ENCODE measurements at regions of chr10 and their contacts with region 1.

Region 1: DNA sequence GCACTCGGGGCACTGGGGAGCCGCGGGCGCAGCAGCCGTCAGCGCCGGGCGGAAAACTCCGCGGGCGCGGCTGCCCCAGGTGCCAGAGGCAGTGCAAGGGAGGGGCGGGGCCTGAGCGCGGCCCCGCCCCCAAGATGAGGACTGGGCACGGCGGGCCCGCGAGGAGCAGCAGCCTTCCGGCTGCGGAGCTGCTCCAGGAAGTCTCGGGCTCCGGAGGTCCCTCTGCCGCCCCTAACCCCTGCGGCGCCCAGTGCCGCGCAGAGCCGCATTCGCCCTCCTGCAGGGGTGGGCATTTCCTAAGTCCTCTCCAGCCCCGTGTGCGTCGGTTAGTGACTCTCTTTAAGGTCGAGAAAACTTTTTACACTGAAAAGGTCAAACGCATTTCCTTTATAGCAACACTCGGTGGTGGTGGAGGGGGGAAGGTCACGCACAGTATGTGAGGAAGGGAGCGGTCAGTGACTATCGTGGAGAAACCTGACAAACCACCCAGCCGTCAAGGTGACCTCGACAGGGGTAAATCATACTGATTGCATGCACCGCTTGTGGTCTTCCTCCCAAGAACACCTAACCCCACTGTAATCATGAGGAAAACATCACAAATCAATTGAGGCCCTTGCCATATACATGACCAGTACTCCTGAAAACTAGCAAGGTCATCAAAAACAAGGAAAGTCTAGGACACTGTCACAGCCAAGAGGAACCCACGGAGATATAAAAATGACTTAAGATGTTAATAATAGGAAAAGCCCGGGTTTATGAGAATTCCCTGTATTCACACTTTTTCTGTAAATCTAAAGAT is at the start of gene ANXA11:
- DNase-seq: peak; percentile 82 to 86 (median 83)
- H3K4me3 ChIP-seq: peak within 1 kb of the TSS; percentile 63 to 96
- H3K4me3 Mint-ChIP-seq: peak within 1 kb of the TSS; percentile 88 to 99 (median 92)
- H3K27ac ChIP-seq: peak within 1 kb of the TSS; percentile 82
- H3K27ac Mint-ChIP-seq: peak within 1 kb of the TSS; percentile 93 to 97 (median 95)
- H3K4me1 ChIP-seq: peaks cover 54% of the 10 kb centered on the region
- H3K4me1 Mint-ChIP-seq: peaks cover 35 to 58% (median 49%) of the 10 kb centered on the region in 4 donors
- H3K27me3 ChIP-seq: no peaks in the 10 kb centered on the region
- H3K27me3 Mint-ChIP-seq: no peaks in the 10 kb centered on the region
- total RNA-seq, gene ANXA11: 202 to 211 TPM

Region 2: DNA sequence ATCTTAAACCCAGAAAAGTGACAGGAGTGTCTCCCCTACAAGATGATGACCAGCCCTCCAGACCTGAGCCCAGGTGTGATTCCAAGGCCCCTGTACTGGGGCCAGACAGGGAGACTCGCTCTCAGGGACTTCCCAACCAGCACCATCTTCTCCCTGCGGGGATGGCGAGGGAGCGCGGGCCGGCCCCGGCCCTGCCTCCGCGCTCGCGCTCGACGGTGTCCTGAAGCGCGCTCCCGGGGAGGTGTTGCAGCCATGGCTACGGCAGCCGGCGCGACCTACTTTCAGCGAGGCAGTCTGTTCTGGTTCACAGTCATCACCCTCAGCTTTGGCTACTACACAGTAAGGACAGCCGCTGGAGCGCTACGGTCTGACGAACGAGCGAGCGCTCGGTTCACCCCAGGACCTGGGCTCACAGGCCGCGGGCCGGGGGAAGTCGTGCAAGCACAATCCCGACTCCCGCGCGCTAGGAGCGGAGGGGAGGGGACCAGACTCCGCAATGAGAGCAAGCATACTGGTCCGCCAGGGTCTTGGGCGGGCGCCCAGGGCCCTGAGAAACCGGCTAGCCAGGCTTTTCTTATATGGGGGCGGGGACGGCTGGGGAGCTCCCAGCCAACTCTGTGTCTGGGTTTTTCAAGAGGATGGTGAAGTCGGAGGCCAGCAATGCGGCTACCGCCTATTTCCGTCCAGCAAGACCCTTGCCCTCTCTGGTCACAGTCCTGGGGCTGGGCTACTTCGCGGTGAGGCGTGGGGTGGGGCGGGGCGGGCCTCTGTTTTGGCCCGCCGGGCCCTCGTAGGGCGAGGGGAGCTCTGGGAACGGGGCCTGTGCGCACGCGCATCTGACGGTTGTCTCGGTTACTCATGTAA is 127.0 kb before region 1 on chr10 and contains the start of gene TMEM254:
- CTCF ChIA-PET with region 1: interaction called, 3 read pairs
- POLR2A ChIA-PET with region 1: interaction called, 6 read pairs
- intact Hi-C with region 1: loop called (anchors 5 kb)
- DNase-seq: peak; percentile 83 to 85 (median 85)
- H3K4me3 ChIP-seq: peak within 1 kb of the TSS; percentile 76 to 86
- H3K4me3 Mint-ChIP-seq: peak within 1 kb of the TSS; percentile 92 to 98 (median 96)
- H3K27ac ChIP-seq: peak within 1 kb of the TSS; percentile 83
- H3K27ac Mint-ChIP-seq: peak within 1 kb of the TSS; percentile 85 to 99 (median 98)
- H3K4me1 ChIP-seq: peaks cover 21% of the 10 kb centered on the region
- H3K4me1 Mint-ChIP-seq: peaks cover 13 to 30% (median 17%) of the 10 kb centered on the region in 4 donors
- H3K27me3 ChIP-seq: no peaks in the 10 kb centered on the region
- H3K27me3 Mint-ChIP-seq: no peaks in the 10 kb centered on the region
- total RNA-seq, gene TMEM254: 14.2 to 16.6 TPM

Region 3: DNA sequence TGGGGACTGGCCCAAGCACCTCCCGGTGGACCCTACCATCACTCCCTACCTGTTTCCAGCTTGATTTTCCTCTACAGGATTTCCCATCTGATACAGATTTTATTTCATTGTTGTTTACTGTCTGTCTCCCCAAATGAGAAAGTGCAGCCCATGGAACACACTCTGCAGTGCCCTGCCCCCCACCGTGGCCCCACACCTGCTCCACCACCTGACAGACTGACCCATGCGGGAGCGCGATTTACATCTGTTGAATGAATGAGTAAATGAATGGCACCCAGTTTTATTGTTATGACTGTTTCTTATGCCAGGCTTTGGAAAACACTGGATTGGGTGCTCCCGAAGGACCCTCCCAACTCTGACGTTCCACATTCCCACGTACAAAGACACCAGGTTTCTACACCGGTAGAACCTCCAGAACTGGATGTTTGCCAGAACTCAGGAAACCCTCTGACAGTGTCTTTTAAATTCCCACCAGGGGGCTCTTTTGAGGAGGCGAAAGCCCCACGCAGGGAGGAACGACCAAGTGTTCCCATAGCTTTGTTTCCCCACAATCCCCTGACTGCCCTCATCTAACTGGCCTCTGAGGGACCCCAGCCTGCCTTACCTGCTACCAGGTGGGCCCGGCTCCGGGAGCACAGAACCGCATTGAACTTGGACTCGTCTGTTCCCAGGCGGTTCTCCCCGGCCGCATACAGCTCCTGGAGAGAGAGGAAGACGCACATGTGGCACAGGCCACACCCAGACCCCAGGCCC is 44.2 kb before region 1 on chr10:
- CTCF ChIA-PET with region 1: interaction called, 5 read pairs
- POLR2A ChIA-PET with region 1: interaction called, 15 read pairs
- intact Hi-C with region 1: loop called (anchors 5 kb)
- DNase-seq: no peak
- H3K4me3 ChIP-seq: no peak overlapping the region
- H3K4me3 Mint-ChIP-seq: no peak overlapping the region
- H3K27ac ChIP-seq: no peak overlapping the region
- H3K27ac Mint-ChIP-seq: peak overlapping the region; percentile 15 to 78 (median 50)
- H3K4me1 ChIP-seq: no peaks in the 10 kb centered on the region
- H3K4me1 Mint-ChIP-seq: peaks cover 0 to 26% (median 2%) of the 10 kb centered on the region in 4 donors
- H3K27me3 ChIP-seq: no peaks in the 10 kb centered on the region
- H3K27me3 Mint-ChIP-seq: no peaks in the 10 kb centered on the region

Region 4: DNA sequence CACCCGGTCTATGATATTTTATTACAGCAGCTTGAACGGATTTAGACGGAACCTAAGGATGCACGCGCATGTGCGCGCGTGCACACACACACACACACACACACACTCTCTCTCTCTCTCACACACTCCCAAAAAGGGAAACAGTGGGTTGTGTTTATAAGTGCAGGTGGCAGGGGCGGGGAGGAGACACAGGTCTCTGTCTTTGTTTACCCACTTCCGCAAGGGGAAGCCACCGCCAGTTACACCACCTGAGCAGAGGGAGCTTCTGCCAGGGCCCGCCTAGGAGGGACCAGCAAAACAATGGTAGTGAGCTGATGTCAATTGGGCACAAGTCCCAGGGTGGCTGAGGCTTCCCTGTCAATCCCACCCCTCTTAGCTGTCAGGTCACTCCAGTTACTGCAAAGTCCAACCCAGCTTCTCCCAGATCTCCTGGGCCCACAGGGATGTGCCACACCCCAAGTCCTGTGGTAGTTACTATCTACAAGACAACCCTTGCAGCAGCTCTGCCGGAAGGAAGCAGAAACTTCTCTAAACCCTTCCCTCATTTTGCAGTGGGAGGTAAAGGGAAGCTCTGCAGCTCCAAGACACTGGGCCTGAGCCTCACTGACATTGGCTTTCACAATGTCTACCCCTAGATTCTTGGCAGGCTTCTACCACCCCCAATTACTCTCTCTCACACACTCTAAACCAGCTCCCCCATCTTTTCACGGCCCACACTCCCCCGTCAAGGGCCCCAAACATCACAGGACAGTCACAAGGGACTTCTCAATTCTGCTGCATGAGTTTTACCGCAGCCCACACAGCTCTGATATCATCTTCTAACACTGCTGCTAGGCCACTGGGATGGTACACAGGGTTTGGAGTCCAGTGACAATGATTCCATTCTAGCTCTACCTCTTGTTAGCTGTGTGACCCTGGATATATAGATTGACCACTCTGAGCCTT is 17.9 kb before region 1 on chr10:
- CTCF ChIA-PET with region 1: interaction called, 92 read pairs
- POLR2A ChIA-PET with region 1: interaction called, 186 read pairs
- intact Hi-C with region 1: loop called (anchors 1 kb)
- DNase-seq: peak; percentile 88 to 94 (median 93)
- H3K4me3 ChIP-seq: peak overlapping the region; percentile 18 to 24
- H3K4me3 Mint-ChIP-seq: peak overlapping the region; percentile 78 to 92 (median 82)
- H3K27ac ChIP-seq: peak overlapping the region; percentile 59
- H3K27ac Mint-ChIP-seq: peak overlapping the region; percentile 88 to 97 (median 94)
- H3K4me1 ChIP-seq: peaks cover 91% of the 10 kb centered on the region
- H3K4me1 Mint-ChIP-seq: peaks cover 56 to 90% (median 77%) of the 10 kb centered on the region in 4 donors
- H3K27me3 ChIP-seq: no peaks in the 10 kb centered on the region
- H3K27me3 Mint-ChIP-seq: no peaks in the 10 kb centered on the region

Region 5: GRCh38 chr10:80372675-80373074 is 167.0 kb after region 1 on chr10:
- CTCF ChIA-PET with region 1: no interaction called
- POLR2A ChIA-PET with region 1: no interaction called
- intact Hi-C with region 1: no loop called
- DNase-seq: no peak
- H3K4me3 ChIP-seq: no peak overlapping the region
- H3K4me3 Mint-ChIP-seq: no peak overlapping the region
- H3K27ac ChIP-seq: no peak overlapping the region
- H3K27ac Mint-ChIP-seq: no peak overlapping the region
- H3K4me1 ChIP-seq: no peaks in the 10 kb centered on the region
- H3K4me1 Mint-ChIP-seq: peaks cover 0 to 2% (median under 1%) of the 10 kb centered on the region in 4 donors
- H3K27me3 ChIP-seq: no peaks in the 10 kb centered on the region
- H3K27me3 Mint-ChIP-seq: peaks cover 5 to 8% of the 10 kb centered on the region in 2 donors

Region 6: GRCh38 chr10:80464557-80465450 is 259.1 kb after region 1 on chr10:
- CTCF ChIA-PET with region 1: no interaction called
- POLR2A ChIA-PET with region 1: no interaction called
- intact Hi-C with region 1: loop called (anchors 5 kb)
- DNase-seq: no peak
- H3K4me3 ChIP-seq: peak overlapping the region; percentile 48 to 58
- H3K4me3 Mint-ChIP-seq: peak overlapping the region; percentile 83 to 100 (median 96)
- H3K27ac ChIP-seq: peak overlapping the region; percentile 83
- H3K27ac Mint-ChIP-seq: peak overlapping the region; percentile 93 to 100 (median 96)
- H3K4me1 ChIP-seq: peaks cover 100% of the 10 kb centered on the region
- H3K4me1 Mint-ChIP-seq: peaks cover 79 to 100% (median 93%) of the 10 kb centered on the region in 4 donors
- H3K27me3 ChIP-seq: no peaks in the 10 kb centered on the region
- H3K27me3 Mint-ChIP-seq: no peaks in the 10 kb centered on the region

Measured in CD4-positive, alpha-beta memory T cell (primary cell).